ENCODE measurements at regions of chr6 and their contacts with region 1.

Region 1: GRCh38 chr6:125114248-125114858 is 39.2 kb upstream of the TPD52L1 start:
- DNase-seq: no peak
- H3K4me3 ChIP-seq: no peak overlapping the region
- H3K27ac ChIP-seq: no peak overlapping the region
- H3K4me1 ChIP-seq: no peaks in the 10 kb centered on the region
- H3K27me3 ChIP-seq: no peaks in the 10 kb centered on the region
- CTCF ChIP-seq: peak in 2 of 3 experiments; percentile 37 to 60; a peak in 2 of 4 replicates
- EP300 ChIP-seq: no peak
- POLR2A ChIP-seq: no peak
- RAD21 ChIP-seq: peak; percentile 70 to 79

Region 2: DNA sequence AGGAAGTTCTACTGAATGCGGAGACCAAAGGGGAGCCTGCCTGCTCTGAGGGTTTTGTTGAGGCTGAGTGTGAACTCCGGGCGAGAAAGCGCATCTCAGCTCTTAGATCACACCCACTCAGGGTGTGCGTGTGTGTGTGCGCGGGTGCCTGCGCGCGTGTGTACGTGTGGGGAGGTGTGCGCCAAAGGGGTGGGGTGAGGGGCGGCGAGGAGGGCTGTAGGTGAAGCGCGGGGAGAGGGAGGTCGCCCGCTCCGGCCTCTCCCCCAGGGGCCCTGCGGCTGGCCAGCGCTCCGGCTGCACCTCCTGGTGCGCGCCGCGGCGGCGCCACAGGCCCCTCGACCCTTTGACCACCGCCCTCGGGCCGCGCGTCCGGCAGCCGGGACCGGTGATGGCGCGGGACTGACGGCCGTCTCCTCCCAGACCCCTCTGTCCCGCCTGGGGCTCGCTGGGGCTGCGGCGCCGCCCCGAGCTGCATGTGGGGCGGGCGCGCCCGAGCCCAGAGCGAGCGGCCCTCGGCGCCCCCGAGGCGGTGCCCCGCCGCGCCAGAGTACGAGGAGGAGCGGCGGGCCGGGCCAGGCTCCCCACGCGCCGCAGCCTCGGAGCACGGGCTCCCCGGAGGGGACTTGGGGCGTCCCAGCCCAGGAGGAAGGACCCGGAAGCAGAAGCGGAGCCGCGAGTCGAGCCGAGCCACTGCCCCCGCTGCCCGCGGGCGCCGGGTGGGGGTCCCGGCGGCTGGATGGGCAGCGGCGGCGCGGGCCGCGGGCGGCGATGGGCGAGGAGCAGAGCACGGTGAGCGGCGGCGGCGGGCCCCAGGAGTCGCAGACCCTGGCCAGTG is 152.4 kb before region 1 on chr6 and contains the start of gene RNF217:
- CTCF ChIA-PET with region 1: interaction called, 17 read pairs
- POLR2A ChIA-PET with region 1: no interaction called
- DNase-seq: peak in 1 of 2 experiments; percentile 77
- H3K4me3 ChIP-seq: peak within 1 kb of the TSS; percentile 69 to 92 (median 81)
- H3K27ac ChIP-seq: no peak within 1 kb of the TSS; the same call in 1 of the 2 replicates
- H3K4me1 ChIP-seq: peaks cover 0 to 2% (median 0%) of the 10 kb centered on the region in 4 experiments; a peak in 2 of 7 replicates
- H3K27me3 ChIP-seq: peaks cover 0 to 5% (median 2%) of the 10 kb centered on the region in 4 experiments; a peak in 2 of 7 replicates
- CTCF ChIP-seq: no peak
- EP300 ChIP-seq: no peak
- POLR2A ChIP-seq: no peak
- RAD21 ChIP-seq: no peak
- total RNA-seq, gene RNF217: 8.9 and 12.0 TPM in 2 replicates

Region 3: GRCh38 chr6:125066140-125066539 is 48.2 kb before region 1 on chr6:
- CTCF ChIA-PET with region 1: interaction called, 10 read pairs
- POLR2A ChIA-PET with region 1: no interaction called
- DNase-seq: no peak
- H3K4me3 ChIP-seq: no peak overlapping the region
- H3K27ac ChIP-seq: no peak overlapping the region
- H3K4me1 ChIP-seq: no peaks in the 10 kb centered on the region
- H3K27me3 ChIP-seq: no peaks in the 10 kb centered on the region
- CTCF ChIP-seq: no peak
- EP300 ChIP-seq: no peak
- POLR2A ChIP-seq: no peak
- RAD21 ChIP-seq: no peak

Region 4: DNA sequence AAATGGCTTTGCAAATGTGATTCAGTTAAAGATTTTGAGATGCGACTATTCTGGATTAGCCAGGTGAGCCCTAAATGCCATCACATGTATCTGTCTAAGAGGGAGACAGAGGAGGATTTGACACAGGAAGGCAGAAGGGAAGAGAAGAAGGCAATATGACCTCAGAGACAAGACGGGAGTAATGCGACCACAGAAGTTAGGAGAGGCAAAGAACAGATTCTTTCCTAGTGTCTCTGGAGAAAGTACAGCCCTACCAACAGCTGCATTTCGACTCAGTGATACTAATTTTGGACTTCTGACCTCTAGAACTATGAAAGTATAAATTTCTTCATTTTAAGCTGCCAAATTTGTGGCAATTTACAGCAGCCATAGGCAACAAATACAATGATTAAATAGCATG is 15.0 kb after region 1 on chr6:
- CTCF ChIA-PET with region 1: interaction called, 38 read pairs
- POLR2A ChIA-PET with region 1: no interaction called
- DNase-seq: no peak
- H3K4me3 ChIP-seq: no peak overlapping the region
- H3K27ac ChIP-seq: no peak overlapping the region
- H3K4me1 ChIP-seq: no peaks in the 10 kb centered on the region
- H3K27me3 ChIP-seq: no peaks in the 10 kb centered on the region
- CTCF ChIP-seq: no peak
- EP300 ChIP-seq: no peak
- POLR2A ChIP-seq: no peak
- RAD21 ChIP-seq: no peak

Region 5: DNA sequence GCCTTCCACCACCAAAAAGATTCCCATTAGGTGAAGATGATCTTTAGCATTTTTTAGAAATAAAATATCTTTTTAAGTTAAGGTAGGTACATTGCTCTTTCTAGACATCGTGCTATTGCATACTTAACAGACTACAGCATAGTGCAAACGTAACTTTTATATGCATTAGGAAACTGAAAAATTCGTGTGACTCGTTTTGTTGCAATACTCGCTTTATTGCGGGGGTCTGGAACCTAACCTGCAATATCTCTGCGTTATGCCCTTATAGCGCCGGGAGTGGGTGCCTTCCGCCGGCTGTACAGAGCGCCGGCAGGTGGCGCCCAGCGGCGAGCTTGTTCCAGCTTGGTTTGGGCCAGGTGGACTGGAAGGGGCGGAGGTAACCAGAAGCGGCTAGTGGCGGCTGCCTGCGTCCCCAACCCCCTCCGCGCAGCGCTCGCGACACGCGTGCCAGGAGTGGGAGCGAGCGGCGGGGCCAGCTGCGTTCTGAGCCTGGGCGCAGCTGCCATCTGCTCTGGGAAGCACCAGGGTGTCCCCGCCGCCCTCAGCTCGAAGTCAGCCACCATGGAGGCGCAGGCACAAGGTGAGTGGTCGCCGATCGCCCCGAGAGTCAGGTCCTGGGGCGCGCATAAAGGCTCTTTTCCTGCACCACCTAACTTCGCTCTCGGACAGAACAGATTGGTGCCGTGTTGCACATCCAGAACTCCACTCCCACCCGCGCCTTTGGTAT is 39.2 kb after region 1 on chr6 and contains the start of gene TPD52L1:
- CTCF ChIA-PET with region 1: interaction called, 15 read pairs
- POLR2A ChIA-PET with region 1: no interaction called
- DNase-seq: peak; percentile 47 to 86
- H3K4me3 ChIP-seq: peak within 1 kb of the TSS; percentile 54 to 85 (median 66)
- H3K27ac ChIP-seq: no peak within 1 kb of the TSS
- H3K4me1 ChIP-seq: peaks cover 0 to 3% (median 1%) of the 10 kb centered on the region in 4 experiments; a peak in 2 of 7 replicates
- H3K27me3 ChIP-seq: peaks cover 0 to 23% (median 14%) of the 10 kb centered on the region in 4 experiments; a peak in 6 of 7 replicates
- CTCF ChIP-seq: peak; percentile 83 to 90 (median 84)
- EP300 ChIP-seq: no peak
- POLR2A ChIP-seq: no peak; a peak in 1 of 3 replicates
- RAD21 ChIP-seq: peak; percentile 71 to 78
- total RNA-seq, gene TPD52L1: 7.4 and 9.6 TPM in 2 replicates

Region 6: DNA sequence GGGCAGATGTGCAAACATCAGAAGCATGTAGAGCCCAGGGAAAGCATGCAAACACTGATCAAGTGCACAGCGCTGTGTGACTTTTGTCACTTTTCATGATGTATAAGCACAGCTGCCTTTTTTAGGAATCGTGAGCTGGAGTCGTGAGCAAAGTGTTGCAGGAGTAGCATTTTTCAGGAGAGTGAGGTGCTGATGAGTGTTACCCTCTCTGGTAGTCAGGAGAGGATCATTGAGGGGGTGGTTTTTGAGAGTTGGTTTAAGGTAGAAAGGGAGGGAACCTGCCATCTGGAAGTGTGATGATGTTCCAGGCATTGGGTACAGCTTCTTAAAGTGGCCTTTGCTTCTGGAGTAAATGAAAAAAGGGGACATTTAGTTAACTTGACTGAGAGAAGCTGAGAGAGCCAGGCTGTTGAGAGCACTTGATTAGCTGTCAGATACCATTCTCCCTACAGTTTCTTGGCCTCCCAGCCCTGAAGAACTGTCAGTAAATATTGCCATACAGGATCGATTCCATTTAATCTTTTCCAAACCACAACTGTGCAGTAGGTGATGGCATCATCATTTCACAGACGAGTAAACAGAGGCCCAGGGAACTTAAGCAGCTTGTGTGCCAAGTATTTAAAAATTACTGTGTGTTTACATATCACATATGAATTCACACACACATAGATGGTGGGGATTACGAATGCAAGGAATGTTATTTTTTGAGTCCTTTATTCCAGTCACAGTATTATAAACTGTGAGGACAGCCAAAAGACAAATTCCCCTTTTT is 68.1 kb after region 1 on chr6:
- CTCF ChIA-PET with region 1: no interaction called
- POLR2A ChIA-PET with region 1: no interaction called
- DNase-seq: no peak
- H3K4me3 ChIP-seq: no peak overlapping the region
- H3K27ac ChIP-seq: no peak overlapping the region
- H3K4me1 ChIP-seq: no peaks in the 10 kb centered on the region
- H3K27me3 ChIP-seq: no peaks in the 10 kb centered on the region
- CTCF ChIP-seq: no peak
- EP300 ChIP-seq: no peak
- POLR2A ChIP-seq: no peak
- RAD21 ChIP-seq: no peak